ENCODE measurements at regions of chr3 and their contacts with region 1.

Region 1: DNA sequence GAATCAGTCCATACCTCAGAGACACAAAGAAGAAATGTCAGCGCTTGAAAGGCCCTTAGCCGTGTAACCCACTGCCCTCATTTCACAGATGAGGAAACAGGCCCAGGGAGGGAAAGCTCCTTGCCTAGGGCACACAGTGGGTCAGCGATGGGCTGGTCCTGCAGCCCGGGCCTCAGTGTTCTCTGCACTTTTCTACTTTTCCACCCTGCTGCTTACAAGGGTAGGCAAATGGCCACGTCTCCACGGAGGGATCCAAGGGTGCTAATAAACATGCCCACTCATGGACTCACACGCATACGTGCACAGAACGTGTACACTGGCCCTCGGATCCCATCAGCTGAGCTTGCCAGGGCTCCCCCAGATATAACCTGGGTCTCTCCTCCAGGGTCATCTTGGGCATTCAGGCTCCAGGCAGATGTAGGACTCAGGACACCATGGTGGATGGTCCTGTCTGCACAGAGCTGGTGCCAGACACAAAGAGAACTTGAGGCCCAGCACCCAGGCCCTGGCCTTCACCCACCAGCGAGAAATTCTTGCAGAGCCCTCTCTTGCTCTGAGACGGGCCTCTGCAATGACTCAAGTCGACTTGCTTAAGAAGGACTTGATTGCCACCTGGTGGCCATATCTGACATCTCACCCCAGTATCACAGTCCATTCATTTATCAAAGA is 34.5 kb upstream of the VPS8 start:
- DNase-seq: peak; percentile 91
- H3K4me3 ChIP-seq: no peak overlapping the region; a peak in 1 of 4 replicates
- H3K27ac ChIP-seq: no peak overlapping the region
- H3K4me1 ChIP-seq: peaks cover 0 to 13% of the 10 kb centered on the region in 2 experiments; a peak in 1 of 4 replicates
- H3K27me3 ChIP-seq: no peaks in the 10 kb centered on the region
- CTCF ChIP-seq: peak; percentile 84
- EP300 ChIP-seq: no peak
- RAD21 ChIP-seq: peak; percentile 99

Region 2: DNA sequence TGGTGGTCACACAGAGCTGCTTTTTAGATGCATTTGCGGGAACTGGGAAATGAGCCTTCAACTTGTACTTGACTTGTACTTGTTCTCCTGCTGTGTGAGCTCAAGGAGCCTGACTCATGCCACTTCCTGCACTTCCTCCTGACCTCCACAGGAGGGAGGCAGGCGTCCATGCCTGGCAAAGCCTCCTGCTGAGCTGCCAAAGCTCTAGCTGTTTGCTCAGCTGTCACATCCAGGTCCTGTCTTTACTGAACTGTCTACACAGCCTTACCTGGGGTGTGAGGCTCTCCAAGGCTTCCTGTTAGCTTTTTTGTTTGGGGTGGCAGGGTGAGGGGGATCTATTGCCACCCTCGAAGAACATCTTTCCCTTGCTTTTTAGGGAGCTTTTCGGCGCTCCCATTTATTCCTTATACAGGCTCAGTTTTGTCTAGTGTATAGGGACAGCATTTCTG is 405.9 kb before region 1 on chr3:
- CTCF ChIA-PET with region 1: interaction called, 17 read pairs
- POLR2A ChIA-PET with region 1: no interaction called
- DNase-seq: peak; percentile 85
- H3K4me3 ChIP-seq: no peak overlapping the region; a peak in 1 of 4 replicates
- H3K27ac ChIP-seq: no peak overlapping the region
- H3K4me1 ChIP-seq: peaks cover 0 to 26% of the 10 kb centered on the region in 2 experiments; a peak in 3 of 4 replicates
- H3K27me3 ChIP-seq: no peaks in the 10 kb centered on the region
- CTCF ChIP-seq: peak; percentile 92
- EP300 ChIP-seq: no peak
- RAD21 ChIP-seq: peak; percentile 97

Region 3: GRCh38 chr3:184568924-184569829 is 208.3 kb before region 1 on chr3:
- CTCF ChIA-PET with region 1: interaction called, 13 read pairs
- POLR2A ChIA-PET with region 1: no interaction called
- DNase-seq: peak; percentile 90
- H3K4me3 ChIP-seq: peak overlapping the region; percentile 50 to 64
- H3K27ac ChIP-seq: peak overlapping the region; percentile 72 to 78
- H3K4me1 ChIP-seq: peaks cover 32 to 65% of the 10 kb centered on the region in 2 experiments
- H3K27me3 ChIP-seq: no peaks in the 10 kb centered on the region
- CTCF ChIP-seq: no peak
- EP300 ChIP-seq: peak; percentile 83 to 93
- RAD21 ChIP-seq: peak; percentile 12

Region 4: DNA sequence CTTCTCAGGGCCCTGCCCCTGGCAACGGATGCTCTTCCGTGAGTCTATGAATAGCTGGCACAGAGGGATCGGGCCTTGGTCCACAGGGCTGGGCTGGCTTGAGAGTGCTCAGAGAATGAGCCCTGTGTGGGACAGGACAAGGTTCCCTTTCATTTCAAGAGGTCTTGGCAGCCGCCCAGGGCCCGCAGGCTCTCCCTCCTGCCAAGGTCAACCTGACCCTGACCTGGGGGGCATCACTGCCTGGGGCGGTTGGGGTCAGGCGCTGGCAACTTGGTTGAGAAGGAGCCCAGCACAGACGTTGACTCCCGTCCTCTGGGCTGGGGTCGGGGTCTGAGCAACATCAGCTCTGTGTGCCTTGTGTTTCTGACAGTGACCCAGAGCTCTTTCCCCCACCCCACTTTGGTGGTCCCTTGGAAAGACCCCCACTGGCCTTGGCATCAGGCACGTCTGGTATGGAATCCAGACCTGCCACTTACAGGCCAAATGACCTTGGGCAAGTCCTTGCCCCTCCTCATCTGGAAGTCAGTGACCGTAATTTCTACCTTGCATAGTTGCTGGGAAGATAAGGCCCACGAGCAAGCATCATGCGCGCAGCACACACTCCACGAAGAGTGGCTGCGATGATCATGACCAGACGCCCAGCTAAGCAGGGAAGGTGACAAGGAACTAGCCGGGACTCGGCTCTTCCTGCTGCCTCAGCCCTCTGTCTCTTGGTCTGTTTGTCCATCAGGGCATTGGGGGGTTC is 179.5 kb before region 1 on chr3:
- CTCF ChIA-PET with region 1: interaction called, 10 read pairs
- POLR2A ChIA-PET with region 1: no interaction called
- DNase-seq: no peak
- H3K4me3 ChIP-seq: no peak overlapping the region; a peak in 1 of 4 replicates
- H3K27ac ChIP-seq: peak overlapping the region in 1 of 2 experiments; percentile 98; a peak in 2 of 4 replicates
- H3K4me1 ChIP-seq: peaks cover 0 to 68% of the 10 kb centered on the region in 2 experiments; a peak in 2 of 4 replicates
- H3K27me3 ChIP-seq: no peaks in the 10 kb centered on the region
- CTCF ChIP-seq: no peak
- EP300 ChIP-seq: peak in 1 of 2 experiments; percentile 44; a peak in 1 of 4 replicates
- RAD21 ChIP-seq: no peak

Region 5: DNA sequence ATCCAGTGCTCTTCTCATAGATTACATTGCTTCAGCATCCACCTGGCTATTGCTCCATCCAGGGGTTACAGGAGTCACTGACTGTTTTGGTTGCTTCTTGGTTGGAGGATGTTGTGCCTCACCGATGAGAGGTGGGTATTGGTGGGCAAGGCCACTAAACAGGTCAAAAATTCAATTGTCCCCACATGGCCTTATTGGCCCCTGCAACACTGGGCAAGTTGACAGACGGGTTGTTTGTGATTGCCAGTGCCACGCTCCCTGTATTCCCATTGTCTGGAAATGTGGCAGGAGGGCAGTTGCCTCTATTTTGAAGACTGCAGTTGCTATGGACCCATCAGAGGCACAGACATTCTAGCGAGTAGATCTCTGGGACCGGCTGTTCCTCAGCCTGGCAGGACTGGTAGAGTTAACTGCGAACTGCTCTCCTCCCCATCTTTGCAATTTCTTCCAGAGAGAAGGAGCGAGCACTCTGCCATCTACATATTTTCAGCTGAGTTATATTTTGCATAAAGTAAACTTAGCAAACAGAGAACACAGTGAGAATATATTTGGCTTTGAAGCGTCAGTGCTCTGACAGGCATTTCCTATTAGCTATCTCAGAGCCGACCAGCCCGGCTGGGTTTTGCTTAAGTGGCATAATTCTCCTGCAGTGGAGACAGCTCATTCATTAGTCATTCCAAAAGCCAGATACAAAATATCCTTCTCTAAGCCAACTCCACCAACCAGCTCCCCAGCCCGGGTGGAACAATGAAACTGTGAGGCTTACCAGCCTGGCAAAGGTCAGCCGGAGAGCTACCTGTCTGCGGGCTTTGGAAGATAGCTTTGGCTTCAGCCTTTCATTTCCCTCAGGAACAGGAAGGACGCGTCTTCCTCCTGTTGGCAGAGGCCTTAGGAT is 39.6 kb before region 1 on chr3:
- CTCF ChIA-PET with region 1: interaction called, 12 read pairs
- POLR2A ChIA-PET with region 1: no interaction called
- DNase-seq: no peak
- H3K4me3 ChIP-seq: no peak overlapping the region
- H3K27ac ChIP-seq: no peak overlapping the region
- H3K4me1 ChIP-seq: peaks cover 14 to 15% of the 10 kb centered on the region in 2 experiments; a peak in 2 of 4 replicates
- H3K27me3 ChIP-seq: no peaks in the 10 kb centered on the region
- CTCF ChIP-seq: no peak
- EP300 ChIP-seq: no peak
- RAD21 ChIP-seq: no peak

Region 6: DNA sequence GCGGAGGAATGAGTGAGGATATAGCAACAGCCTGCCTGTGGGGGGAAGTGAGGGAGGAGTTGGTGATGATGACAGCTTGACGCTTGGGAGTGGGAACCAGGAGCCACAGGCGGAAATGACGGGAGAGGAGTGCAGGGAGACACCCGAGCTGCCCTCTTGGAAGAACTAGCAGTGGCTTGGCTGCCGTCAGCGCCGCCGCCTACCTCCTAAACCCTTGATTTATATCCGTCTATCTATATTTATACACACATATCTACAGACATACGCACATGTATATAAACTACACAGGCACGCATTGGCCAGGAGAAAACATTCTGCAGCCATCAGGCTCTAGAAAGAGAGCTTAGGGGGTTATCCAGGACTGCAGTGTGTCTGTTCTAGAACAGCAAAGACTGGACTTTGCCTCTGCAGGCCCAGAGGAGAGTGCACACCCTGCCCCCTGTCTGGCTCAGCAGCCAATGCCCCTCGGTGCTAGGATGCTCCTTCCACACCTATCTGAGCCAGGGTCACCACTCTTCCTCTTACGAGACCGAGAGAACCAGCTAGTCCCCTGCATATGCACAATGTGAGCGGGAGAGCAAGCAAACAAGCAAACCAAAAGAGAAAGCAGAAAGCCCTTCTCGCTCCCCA is 20.3 kb before region 1 on chr3:
- CTCF ChIA-PET with region 1: interaction called, 12 read pairs
- POLR2A ChIA-PET with region 1: interaction called, 4 read pairs
- DNase-seq: no peak
- H3K4me3 ChIP-seq: no peak overlapping the region
- H3K27ac ChIP-seq: no peak overlapping the region
- H3K4me1 ChIP-seq: peaks cover 0 to 2% of the 10 kb centered on the region in 2 experiments; a peak in 1 of 4 replicates
- H3K27me3 ChIP-seq: no peaks in the 10 kb centered on the region
- CTCF ChIP-seq: no peak
- EP300 ChIP-seq: no peak
- RAD21 ChIP-seq: no peak

Region 7: DNA sequence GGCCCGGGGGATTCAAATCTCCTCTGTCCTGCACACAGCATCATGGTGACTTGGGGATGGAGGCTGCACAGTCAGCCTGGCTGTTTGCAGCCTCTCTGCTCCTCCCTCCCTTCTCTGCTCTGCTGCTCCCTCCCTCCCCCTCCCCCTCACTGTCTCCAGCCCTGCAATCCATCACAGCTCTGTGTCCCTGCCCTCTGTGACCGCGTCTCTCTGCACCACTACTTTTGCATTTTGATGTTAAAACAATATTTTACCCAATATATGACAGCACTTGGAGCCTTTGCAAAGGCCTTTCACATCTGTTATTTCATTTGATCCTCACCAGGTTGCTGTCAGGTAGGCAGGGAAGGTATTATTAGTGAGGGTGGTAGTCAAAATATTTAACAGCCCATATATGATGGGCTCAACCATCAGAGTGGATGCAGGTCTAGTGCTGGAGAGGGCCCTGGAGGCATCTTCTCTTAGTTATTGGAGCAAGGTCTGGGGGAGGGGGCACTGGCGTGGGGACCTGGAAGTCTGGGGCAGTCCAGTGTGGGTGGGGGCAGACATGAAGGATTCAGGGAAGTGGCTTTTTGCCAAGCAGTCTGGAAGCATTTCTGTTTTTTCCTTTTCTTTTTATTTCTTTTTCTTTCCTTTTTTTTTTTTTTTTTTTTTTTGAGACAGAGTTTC is 18.2 kb after region 1 on chr3:
- CTCF ChIA-PET with region 1: interaction called, 10 read pairs
- POLR2A ChIA-PET with region 1: no interaction called
- DNase-seq: peak; percentile 80
- H3K4me3 ChIP-seq: no peak overlapping the region
- H3K27ac ChIP-seq: no peak overlapping the region
- H3K4me1 ChIP-seq: peaks cover 0 to 8% of the 10 kb centered on the region in 2 experiments; a peak in 1 of 4 replicates
- H3K27me3 ChIP-seq: no peaks in the 10 kb centered on the region; the same call in 1 of the 2 replicates
- CTCF ChIP-seq: no peak
- EP300 ChIP-seq: no peak
- RAD21 ChIP-seq: no peak